ENCODE measurements at regions of chr12 and their contacts with region 1.

Region 1: GRCh38 chr12:13744561-13744960 is 236.8 kb downstream of the GRIN2B start:
- DNase-seq: no peak

Region 2: GRCh38 chr12:13691598-13691997 is 53.0 kb before region 1 on chr12:
- intact Hi-C with region 1: no loop called
- DNase-seq: no peak

Region 3: DNA sequence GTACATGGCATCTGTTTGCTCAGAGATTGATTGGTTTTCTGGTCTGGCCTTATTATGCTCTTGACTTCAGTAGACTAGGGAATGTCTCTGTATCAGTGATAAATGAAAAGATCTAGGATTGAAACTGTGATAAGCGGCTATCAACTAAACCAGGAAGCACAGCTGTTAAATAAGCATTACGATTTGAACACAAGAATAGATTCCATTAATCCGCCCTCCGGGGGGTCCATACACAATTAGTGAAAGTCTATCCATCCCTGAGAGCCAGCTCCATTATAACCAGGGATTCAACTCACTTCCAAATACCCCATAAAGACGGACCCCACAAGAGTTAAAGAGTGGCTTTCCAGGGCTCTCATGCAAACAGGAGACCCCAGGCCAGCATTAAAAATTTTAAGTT is 42.2 kb before region 1 on chr12:
- intact Hi-C with region 1: no loop called
- DNase-seq: no peak

Region 4: DNA sequence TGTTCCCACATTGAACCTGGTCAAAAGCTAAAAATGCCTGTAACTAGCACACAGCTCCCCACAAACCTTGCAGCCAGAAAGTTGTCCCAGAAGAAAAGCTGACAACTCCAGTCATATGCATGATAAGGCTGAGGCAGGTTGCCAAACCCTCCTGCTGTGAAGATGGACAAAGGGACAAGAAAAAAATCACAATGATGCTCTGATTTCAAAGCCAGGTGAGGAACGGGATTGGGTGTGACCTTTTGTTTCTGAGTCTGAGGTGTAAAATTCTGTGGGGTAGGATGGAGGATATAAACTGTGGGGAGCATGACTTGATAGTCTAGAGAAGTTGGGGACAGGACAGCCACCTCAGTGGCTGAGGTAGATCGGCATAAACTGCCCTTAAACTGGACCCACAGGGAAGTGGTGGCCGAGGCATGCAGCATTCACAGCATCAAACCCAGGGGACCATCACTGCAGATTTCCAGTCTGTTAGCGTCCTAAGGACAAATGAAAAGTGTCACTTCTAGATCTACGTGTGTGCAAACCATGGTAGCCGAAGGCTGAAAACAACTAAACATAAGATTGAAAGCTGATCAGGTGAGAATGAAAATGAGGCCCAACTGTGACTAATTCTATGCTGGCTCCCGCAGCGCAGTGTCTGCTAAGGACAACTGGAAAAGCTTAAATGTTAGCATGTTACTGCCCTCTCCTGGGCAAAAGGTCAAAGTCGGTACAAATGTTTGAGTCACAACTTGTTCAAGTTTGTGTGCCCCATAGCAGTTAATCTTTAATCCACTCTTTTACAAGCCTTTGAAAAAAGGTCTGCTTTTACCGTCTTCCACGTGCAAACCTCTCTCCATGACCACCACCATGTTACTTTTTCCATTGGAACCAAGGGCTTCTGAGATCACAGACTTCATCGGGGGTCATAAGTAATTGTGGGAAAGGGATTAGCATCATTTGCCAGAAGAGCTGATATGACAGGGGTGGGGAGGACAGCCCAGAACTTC is 197.0 kb after region 1 on chr12:
- intact Hi-C with region 1: loop called (anchors 5 kb)
- DNase-seq: no peak

Measured in cardiac septum (tissue), 1 donor.